ENCODE measurements at regions of chr13 and their contacts with region 1.

Region 1: GRCh38 chr13:99033814-99034213 is 56.0 kb upstream of the DOCK9 start:
- DNase-seq: no peak
- H3K4me3 ChIP-seq: no peak overlapping the region
- H3K27ac ChIP-seq: no peak overlapping the region
- H3K4me1 ChIP-seq: no peaks in the 10 kb centered on the region
- H3K27me3 ChIP-seq: no peaks in the 10 kb centered on the region
- CTCF ChIP-seq: peak in 3 of 4 experiments; percentile 44 to 72 (median 58)
- POLR2A ChIP-seq: no peak

Region 2: DNA sequence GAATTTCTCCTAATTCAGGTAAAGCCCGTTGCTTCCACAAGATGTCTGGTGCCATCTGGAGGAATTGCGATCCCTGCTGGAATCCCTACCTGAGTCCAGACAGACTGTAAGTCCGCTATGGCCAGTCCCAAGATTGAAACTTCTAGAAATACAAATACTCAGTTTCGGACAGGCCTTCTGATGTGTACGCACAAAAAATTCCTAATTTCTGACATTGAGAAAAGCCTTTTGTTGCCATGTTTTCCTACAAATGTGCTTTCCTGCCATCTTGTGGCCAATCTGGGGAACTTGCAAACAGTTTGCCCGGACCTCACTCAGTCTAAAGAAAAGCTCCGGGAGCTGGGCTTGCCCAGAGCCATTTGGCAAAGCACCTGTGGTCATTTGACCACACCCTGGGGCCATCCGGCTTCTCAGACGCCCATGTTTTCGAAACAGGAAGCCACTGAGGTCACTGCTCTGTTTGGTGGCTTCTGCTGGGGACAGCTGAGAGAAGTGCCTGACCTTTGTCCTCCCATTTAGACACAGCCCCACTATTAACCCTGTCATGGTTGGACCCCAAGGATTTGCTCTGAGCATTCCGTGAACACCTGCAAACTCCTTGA is 360.8 kb before region 1 on chr13:
- intact Hi-C with region 1: loop called (anchors 10 kb)
- DNase-seq: peak; percentile 54
- H3K4me3 ChIP-seq: no peak overlapping the region
- H3K27ac ChIP-seq: no peak overlapping the region
- H3K4me1 ChIP-seq: no peaks in the 10 kb centered on the region
- H3K27me3 ChIP-seq: no peaks in the 10 kb centered on the region
- CTCF ChIP-seq: peak; percentile 63 to 92 (median 77)
- POLR2A ChIP-seq: no peak

Region 3: DNA sequence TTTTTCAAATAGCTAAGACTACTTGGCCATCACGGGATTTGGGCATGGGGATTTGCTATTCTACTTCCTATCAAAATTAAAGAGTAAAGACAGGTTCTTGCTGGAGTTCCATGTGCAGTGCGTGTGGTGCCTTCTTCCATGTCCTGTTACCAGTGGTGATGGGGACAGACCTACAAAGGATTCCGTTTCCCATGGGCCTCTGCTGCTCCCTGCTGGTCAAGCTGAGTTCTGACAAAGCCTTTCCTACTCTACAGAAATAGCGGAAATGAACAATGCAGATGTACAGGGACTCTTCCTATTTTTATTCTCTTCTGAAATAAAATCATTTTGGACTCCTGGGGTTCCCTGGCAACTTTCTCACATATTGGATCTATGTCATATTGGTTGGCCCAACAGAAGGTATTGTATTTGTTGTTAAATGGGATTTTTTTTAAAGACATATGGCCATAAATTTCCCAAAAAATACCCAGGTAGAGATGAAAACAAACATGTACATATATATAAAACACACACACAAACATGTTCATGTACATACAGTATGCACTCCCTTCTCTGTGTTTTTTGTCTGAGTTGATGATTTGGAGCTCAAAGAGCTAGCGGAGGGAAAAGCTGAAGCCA is 190.8 kb before region 1 on chr13:
- intact Hi-C with region 1: loop called (anchors 1 kb)
- DNase-seq: peak; percentile 46
- H3K4me3 ChIP-seq: no peak overlapping the region
- H3K27ac ChIP-seq: no peak overlapping the region
- H3K4me1 ChIP-seq: no peaks in the 10 kb centered on the region
- H3K27me3 ChIP-seq: no peaks in the 10 kb centered on the region
- CTCF ChIP-seq: peak; percentile 74 to 83 (median 76)
- POLR2A ChIP-seq: no peak